Posterior vena cava (tissue), 2 donors: ENCODE measurements at regions of chr11 and their contacts with region 1.

Region 1: DNA sequence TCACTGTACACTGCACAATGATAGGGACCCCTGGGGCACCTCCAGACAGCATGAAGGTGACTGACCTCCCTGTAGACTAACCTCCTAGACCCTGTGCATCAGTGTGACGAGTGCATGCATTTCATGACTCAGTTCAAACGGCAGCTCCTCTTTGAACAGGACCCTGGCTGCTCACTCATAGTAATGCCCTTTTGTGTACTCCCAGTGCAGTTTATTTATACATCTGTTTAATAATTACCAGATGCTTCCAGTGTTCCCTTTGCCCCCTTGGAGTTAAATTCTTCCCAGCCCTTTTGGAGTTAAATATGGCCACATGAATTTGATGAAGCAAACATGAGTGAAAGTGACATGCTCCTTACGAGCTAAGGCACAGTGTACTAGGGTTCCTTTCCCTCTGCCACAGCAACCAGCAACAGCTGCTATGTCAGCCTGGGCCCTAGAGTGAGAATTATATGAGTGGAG is 72.4 kb downstream of the PANX1 start:
- DNase-seq: no peak

Region 2: GRCh38 chr11:94060405-94060804 is 140.6 kb before region 1 on chr11:
- intact Hi-C with region 1: no loop called
- DNase-seq: no peak

Region 3: GRCh38 chr11:94219771-94220170 is 18.7 kb after region 1 on chr11:
- intact Hi-C with region 1: loop called in 1 of 2 experiments (anchors 1 kb)
- DNase-seq: no peak